Mammary epithelial cell (primary cell): ENCODE measurements at regions of chr14 and their contacts with region 1.

Region 1: DNA sequence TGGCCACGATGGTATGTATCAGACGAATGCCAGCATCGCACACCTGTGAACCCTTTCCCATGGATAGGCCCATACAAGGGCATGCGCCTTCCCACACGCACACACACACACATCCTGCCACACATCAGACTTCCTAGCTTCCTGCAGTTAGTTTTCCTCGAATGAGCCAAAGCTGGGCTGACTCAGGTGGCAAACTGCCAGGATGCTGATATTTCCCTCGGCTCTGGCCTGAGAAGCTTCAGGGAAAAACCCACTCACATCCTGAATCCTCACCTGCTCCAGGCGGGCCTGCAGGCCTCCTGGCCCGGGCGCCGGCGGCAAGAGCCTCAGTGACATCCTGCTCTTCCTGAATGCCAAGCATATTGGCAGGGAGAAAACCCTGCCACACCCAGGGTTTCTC is 22.4 kb downstream of the CALM1 start:
- DNase-seq: peak; percentile 98
- H3K4me3 ChIP-seq: no peak overlapping the region
- H3K27ac ChIP-seq: peak overlapping the region; percentile 40
- H3K4me1 ChIP-seq: peaks cover 17% of the 10 kb centered on the region
- H3K27me3 ChIP-seq: no peaks in the 10 kb centered on the region
- CTCF ChIP-seq: no peak

Region 2: DNA sequence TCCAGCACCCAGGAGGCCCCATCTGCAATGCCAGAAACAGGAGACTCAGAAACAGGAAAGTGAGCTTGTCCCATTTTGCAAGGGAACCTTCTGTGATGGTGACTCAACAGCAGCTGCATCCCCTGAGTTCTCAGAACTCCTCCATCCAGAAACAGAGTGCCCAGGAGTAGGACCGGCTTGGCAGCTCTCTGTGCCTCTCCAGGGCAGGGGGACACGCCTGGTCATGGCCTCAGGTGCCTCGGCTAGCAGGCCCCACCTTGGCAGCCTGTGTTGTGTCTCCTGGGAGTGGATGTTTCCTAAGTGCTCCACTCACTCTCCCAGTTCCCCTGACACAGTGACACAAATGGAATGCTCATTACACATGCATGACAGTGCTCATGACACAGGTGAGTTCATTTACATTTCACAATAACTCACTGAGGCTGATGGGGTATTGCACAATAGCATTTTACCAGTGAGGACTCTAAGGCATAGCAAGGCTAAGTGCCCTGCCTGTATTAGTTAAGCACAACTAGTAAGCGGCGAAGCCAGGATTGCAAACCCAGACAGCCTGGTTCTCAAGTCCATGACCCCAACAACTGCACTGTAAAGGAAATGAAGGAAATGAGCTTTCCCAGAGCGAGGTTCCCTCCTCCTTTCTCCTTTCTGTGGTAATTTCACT is 25.0 kb after region 1 on chr14:
- CTCF ChIA-PET with region 1: no interaction called
- dilution Hi-C with region 1: no loop called
- in situ Hi-C with region 1: no loop called
- intact Hi-C with region 1: loop called (anchors 1 kb)
- DNase-seq: peak; percentile 98
- H3K4me3 ChIP-seq: no peak overlapping the region
- H3K27ac ChIP-seq: peak overlapping the region; percentile 69
- H3K4me1 ChIP-seq: peaks cover 32% of the 10 kb centered on the region
- H3K27me3 ChIP-seq: no peaks in the 10 kb centered on the region
- CTCF ChIP-seq: no peak

Region 3: GRCh38 chr14:90461425-90461824 is 42.2 kb after region 1 on chr14:
- CTCF ChIA-PET with region 1: no interaction called
- dilution Hi-C with region 1: no loop called
- in situ Hi-C with region 1: no loop called
- intact Hi-C with region 1: no loop called
- DNase-seq: no peak
- H3K4me3 ChIP-seq: no peak overlapping the region
- H3K27ac ChIP-seq: no peak overlapping the region
- H3K4me1 ChIP-seq: peaks cover 15% of the 10 kb centered on the region
- H3K27me3 ChIP-seq: no peaks in the 10 kb centered on the region
- CTCF ChIP-seq: peak in 1 of 2 donors; percentile 10

Region 4: GRCh38 chr14:90518941-90519256 is 99.7 kb after region 1 on chr14:
- CTCF ChIA-PET with region 1: no interaction called
- dilution Hi-C with region 1: loop called (anchors 5 kb)
- in situ Hi-C with region 1: no loop called
- intact Hi-C with region 1: no loop called
- DNase-seq: no peak
- H3K4me3 ChIP-seq: no peak overlapping the region
- H3K27ac ChIP-seq: no peak overlapping the region
- H3K4me1 ChIP-seq: peaks cover 17% of the 10 kb centered on the region
- H3K27me3 ChIP-seq: no peaks in the 10 kb centered on the region
- CTCF ChIP-seq: peak; percentile 46 to 62